Naive thymus-derived CD4-positive, alpha-beta T cell (primary cell): ENCODE measurements at regions of chr16 and their contacts with region 1.

Region 1: DNA sequence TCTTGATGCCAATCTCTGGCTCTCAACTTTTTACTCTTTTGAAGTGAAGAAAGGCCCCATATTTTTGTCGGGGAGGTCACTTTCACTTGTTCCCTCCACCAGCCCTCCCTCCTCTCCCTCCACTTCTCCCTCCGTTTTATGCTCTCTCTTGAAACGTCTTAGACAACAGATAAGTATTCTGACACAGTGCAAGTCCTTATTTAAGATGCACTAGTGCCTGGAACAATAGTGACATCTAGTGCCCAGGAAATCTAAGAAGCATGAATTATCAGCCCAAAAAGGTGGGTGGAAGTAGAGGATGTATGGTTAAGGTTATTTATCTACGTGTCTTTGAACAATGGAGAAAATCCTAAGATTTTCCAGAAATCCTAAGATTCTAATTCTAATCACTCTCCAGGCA is 17.9 kb downstream of the PSME3IP1 start:
- DNase-seq: peak in 7 of 9 donors; percentile 51 to 80 (median 69)
- ATAC-seq: peak; percentile 91
- H3K4me3 ChIP-seq: no peak overlapping the region
- H3K4me3 Mint-ChIP-seq: peak overlapping the region in 1 of 10 donors; percentile 35
- H3K27ac ChIP-seq: no peak overlapping the region
- H3K27ac Mint-ChIP-seq: peak overlapping the region in 2 of 9 donors; percentile 19 to 61
- H3K4me1 ChIP-seq: peaks cover 0 to 4% of the 10 kb centered on the region in 2 donors
- H3K4me1 Mint-ChIP-seq: peaks cover 5 to 28% (median 15%) of the 10 kb centered on the region in 7 donors
- H3K27me3 ChIP-seq: no peaks in the 10 kb centered on the region
- H3K27me3 Mint-ChIP-seq: no peaks in the 10 kb centered on the region

Region 2: DNA sequence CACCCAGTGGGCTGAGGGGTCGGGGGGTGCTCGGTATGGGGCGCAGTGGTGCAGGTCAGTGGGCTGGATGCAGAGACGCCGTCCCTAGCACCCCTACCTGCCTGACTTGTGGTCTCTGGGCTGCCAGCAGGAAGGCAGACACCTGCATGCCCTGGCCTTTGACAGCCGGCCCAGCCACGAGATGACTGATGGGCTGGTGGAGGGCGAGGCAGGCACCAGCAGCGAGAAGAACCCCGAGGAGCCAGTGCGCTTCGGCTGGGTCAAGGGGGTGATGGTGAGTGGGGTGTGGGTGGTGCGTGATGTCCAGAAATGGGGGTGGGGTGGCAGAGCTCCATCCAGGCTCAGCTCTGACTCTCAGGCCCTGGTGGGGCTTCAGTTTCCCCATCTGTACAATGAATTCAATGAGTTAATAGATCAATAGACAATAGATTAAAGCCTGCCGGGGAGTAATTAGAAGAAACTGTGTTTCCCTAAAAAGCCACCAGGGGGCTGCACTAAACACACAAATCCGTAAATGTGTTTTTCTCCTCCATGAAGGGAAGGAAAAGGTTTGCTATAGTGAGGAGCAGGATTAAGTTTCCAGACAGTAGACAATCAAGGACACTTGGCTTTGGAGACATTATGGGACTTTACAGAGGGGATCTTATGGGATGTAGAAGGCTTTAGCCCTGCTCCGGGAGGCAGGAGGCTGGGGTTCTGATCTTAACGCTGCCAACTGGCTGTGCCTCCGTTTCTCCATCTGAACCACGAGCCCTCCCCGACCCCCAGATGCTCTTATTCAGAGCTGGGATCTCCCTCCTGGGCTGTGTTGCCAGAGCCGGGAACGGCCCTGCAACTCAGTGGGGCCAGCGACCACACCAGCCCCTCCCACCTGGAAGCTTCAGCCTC is 300.8 kb before region 1 on chr16:
- CTCF ChIA-PET with region 1: interaction called, 3 read pairs
- POLR2A ChIA-PET with region 1: no interaction called
- intact Hi-C with region 1: loop called in 1 of 2 experiments (anchors 1 kb)
- DNase-seq: peak in 7 of 9 donors; percentile 45 to 68 (median 56)
- ATAC-seq: peak; percentile 55
- H3K4me3 ChIP-seq: no peak overlapping the region
- H3K4me3 Mint-ChIP-seq: no peak overlapping the region
- H3K27ac ChIP-seq: no peak overlapping the region
- H3K27ac Mint-ChIP-seq: peak overlapping the region in 2 of 9 donors; percentile 70 to 82
- H3K4me1 ChIP-seq: peaks cover 0 to 14% of the 10 kb centered on the region in 2 donors
- H3K4me1 Mint-ChIP-seq: peaks cover 0 to 19% (median 16%) of the 10 kb centered on the region in 7 donors
- H3K27me3 ChIP-seq: no peaks in the 10 kb centered on the region
- H3K27me3 Mint-ChIP-seq: no peaks in the 10 kb centered on the region

Region 3: DNA sequence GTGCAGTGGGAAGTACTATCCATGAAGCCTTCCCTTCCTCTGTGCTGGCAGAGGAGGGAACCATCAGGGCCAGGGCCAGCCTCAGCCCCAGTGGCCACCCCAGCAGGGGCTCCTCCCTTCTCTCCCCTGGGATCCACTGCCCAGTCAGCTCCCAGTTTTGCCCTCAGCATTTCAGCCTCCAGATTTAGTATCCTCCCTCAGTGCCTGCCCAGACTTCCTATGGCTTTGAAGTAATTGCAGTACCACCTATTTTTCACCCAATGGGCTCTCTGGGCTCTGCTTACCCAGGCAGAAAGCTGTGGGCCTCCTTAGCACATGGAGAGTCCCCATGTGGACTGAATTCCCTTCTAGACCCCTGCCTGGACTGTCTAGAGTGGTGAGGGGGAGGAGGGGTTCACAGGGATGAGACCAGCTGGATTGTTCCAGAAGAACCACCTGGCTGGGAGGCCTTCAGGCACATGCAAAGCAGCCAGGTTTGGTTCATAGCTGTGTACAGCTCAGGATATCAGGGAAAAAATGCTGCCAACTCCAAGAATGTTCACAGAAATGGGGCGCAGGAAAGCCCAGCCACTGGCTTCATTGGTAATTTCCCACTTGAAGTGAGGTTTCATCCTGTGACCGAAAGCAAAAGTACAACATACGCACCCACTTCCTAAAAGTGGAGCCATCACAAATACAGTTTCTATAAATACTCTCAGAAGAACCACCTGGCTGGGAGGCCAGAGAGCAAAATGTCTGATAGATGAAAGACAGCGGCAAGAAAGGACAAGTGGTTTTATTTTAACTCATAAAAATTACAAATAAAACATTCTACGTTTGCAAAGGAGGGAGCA is 251.2 kb before region 1 on chr16:
- CTCF ChIA-PET with region 1: no interaction called
- POLR2A ChIA-PET with region 1: no interaction called
- intact Hi-C with region 1: no loop called
- DNase-seq: peak in 4 of 9 donors; percentile 18 to 39 (median 25)
- ATAC-seq: peak; percentile 79
- H3K4me3 ChIP-seq: peak overlapping the region; percentile 15
- H3K4me3 Mint-ChIP-seq: peak overlapping the region in 9 of 10 donors; percentile 34 to 74 (median 45)
- H3K27ac ChIP-seq: peak overlapping the region; percentile 31
- H3K27ac Mint-ChIP-seq: peak overlapping the region; percentile 11 to 88 (median 74)
- H3K4me1 ChIP-seq: peaks cover 14 to 15% of the 10 kb centered on the region in 2 donors
- H3K4me1 Mint-ChIP-seq: peaks cover 18 to 51% (median 20%) of the 10 kb centered on the region in 7 donors
- H3K27me3 ChIP-seq: no peaks in the 10 kb centered on the region
- H3K27me3 Mint-ChIP-seq: peaks cover 0 to 17% (median 0%) of the 10 kb centered on the region in 5 donors

Region 4: DNA sequence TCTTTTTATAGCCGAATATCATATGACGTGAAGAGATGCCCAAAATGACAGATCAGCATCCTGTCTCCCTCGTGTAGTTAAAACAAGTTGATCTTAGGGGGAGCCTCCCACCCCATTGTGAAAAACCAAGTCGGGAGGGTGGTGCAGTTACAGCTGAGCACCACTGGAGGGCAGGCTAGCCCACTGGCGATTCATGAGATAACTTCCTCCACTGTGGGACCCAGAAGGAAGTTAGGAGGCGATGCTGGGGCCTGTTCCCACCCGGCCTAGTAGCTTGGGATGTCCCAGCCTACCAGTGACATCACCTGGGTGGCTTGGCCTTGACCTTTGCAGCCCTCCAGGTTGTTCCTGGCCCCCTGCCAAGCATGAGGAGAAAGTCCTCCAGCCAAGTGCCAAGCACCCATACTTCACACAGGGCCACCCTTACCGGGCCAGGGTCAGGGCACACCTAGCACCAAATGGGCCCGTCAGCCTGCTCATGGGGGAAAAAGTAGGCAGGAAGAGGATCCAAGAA is 83.6 kb before region 1 on chr16:
- CTCF ChIA-PET with region 1: interaction called, 36 read pairs
- POLR2A ChIA-PET with region 1: interaction called, 8 read pairs
- intact Hi-C with region 1: loop called (anchors 1 kb)
- DNase-seq: peak; percentile 52 to 86 (median 80)
- ATAC-seq: peak; percentile 98
- H3K4me3 ChIP-seq: no peak overlapping the region
- H3K4me3 Mint-ChIP-seq: peak overlapping the region in 2 of 10 donors; percentile 3 to 37
- H3K27ac ChIP-seq: peak overlapping the region; percentile 72
- H3K27ac Mint-ChIP-seq: peak overlapping the region; percentile 19 to 97 (median 90)
- H3K4me1 ChIP-seq: peaks cover 11% of the 10 kb centered on the region in 2 donors
- H3K4me1 Mint-ChIP-seq: peaks cover 6 to 16% (median 14%) of the 10 kb centered on the region in 7 donors
- H3K27me3 ChIP-seq: no peaks in the 10 kb centered on the region
- H3K27me3 Mint-ChIP-seq: no peaks in the 10 kb centered on the region

Region 5: GRCh38 chr16:57134982-57135381 is 33.0 kb before region 1 on chr16:
- CTCF ChIA-PET with region 1: no interaction called
- POLR2A ChIA-PET with region 1: no interaction called
- intact Hi-C with region 1: loop called in 1 of 2 experiments (anchors 2 kb)
- DNase-seq: peak in 8 of 9 donors; percentile 34 to 59 (median 48)
- ATAC-seq: peak; percentile 82
- H3K4me3 ChIP-seq: peak overlapping the region; percentile 75
- H3K4me3 Mint-ChIP-seq: peak overlapping the region; percentile 83 to 97 (median 88)
- H3K27ac ChIP-seq: peak overlapping the region; percentile 80
- H3K27ac Mint-ChIP-seq: peak overlapping the region; percentile 88 to 96 (median 95)
- H3K4me1 ChIP-seq: peaks cover 61 to 65% of the 10 kb centered on the region in 2 donors
- H3K4me1 Mint-ChIP-seq: peaks cover 31 to 97% (median 79%) of the 10 kb centered on the region in 7 donors
- H3K27me3 ChIP-seq: no peaks in the 10 kb centered on the region
- H3K27me3 Mint-ChIP-seq: no peaks in the 10 kb centered on the region

Region 6: DNA sequence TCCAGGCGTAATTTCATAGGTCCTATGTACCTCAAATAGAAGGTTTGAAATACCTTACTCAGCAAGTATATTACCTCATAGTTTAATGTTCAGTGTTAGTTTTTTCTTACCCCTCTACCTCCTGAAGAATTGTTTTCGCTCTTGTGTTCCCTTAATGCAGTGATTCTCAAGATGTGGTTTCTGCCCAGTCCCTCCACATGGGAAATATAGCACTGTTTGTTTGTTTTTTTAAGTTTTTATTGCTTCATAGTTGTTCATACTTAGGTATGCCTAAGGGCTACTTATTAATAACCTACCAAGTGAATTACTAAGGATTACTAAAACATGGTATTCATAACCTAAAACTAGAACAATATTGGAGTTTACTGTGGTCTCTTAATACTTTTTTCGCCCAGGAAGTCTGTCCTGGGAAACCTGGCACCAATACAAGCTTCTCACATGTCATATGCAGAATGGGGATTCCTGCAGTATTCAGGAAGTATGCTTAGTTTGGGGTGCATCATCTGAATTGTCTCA is 23.2 kb after region 1 on chr16:
- CTCF ChIA-PET with region 1: no interaction called
- POLR2A ChIA-PET with region 1: no interaction called
- intact Hi-C with region 1: no loop called
- DNase-seq: no peak
- ATAC-seq: no peak
- H3K4me3 ChIP-seq: no peak overlapping the region
- H3K4me3 Mint-ChIP-seq: peak overlapping the region in 2 of 10 donors; percentile 0 to 9
- H3K27ac ChIP-seq: no peak overlapping the region
- H3K27ac Mint-ChIP-seq: peak overlapping the region in 1 of 9 donors; percentile 39
- H3K4me1 ChIP-seq: peaks cover 5 to 16% of the 10 kb centered on the region in 2 donors
- H3K4me1 Mint-ChIP-seq: peaks cover 32 to 77% (median 61%) of the 10 kb centered on the region in 7 donors
- H3K27me3 ChIP-seq: no peaks in the 10 kb centered on the region
- H3K27me3 Mint-ChIP-seq: no peaks in the 10 kb centered on the region